Prostate gland (tissue), 2 donors: ENCODE measurements at regions of chr11 and their contacts with region 1.

Region 1: GRCh38 chr11:30322826-30323710 is at the start of gene ARL14EP:
- DNase-seq: peak; percentile 92
- H3K4me3 ChIP-seq: peak within 1 kb of the TSS; percentile 72 to 75
- H3K27ac ChIP-seq: peak within 1 kb of the TSS; percentile 79 to 82
- H3K4me1 ChIP-seq: no peaks in the 10 kb centered on the region
- H3K27me3 ChIP-seq: no peaks in the 10 kb centered on the region
- CTCF ChIP-seq: no peak
- POLR2A ChIP-seq: peak; percentile 75
- total RNA-seq, gene ARL14EP: 26.0 to 27.9 TPM

Region 2: DNA sequence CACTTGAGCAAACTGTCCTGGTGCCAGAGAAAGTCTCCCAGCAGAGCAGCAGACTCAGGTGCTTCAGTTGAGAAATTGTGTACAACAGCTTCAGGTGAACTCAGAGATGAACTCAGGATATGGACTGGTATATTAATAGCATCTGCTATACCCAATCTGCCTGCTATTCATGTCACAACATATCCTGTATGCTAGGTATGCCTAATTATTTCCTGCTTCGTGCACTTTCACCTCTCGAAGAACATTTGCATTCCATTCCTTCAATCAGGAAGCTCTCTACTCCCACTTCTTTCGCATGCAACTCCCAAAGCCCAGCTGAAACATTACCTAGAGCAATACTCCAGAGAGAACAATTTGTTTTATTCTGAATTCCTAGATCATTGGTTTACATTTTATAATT is 513.9 kb before region 1 on chr11:
- intact Hi-C with region 1: no loop called
- DNase-seq: no peak
- H3K4me3 ChIP-seq: no peak overlapping the region
- H3K27ac ChIP-seq: no peak overlapping the region
- H3K4me1 ChIP-seq: no peaks in the 10 kb centered on the region
- H3K27me3 ChIP-seq: no peaks in the 10 kb centered on the region
- CTCF ChIP-seq: no peak
- POLR2A ChIP-seq: no peak

Region 3: GRCh38 chr11:30128269-30128932 is 194.7 kb before region 1 on chr11:
- intact Hi-C with region 1: loop called (anchors 10 kb)
- DNase-seq: peak; percentile 11
- H3K4me3 ChIP-seq: no peak overlapping the region
- H3K27ac ChIP-seq: no peak overlapping the region
- H3K4me1 ChIP-seq: no peaks in the 10 kb centered on the region
- H3K27me3 ChIP-seq: no peaks in the 10 kb centered on the region
- CTCF ChIP-seq: peak in 3 of 4 experiments; percentile 42 to 54 (median 43)
- POLR2A ChIP-seq: no peak